ENCODE measurements at regions of chr6 and their contacts with region 1.

Region 1: DNA sequence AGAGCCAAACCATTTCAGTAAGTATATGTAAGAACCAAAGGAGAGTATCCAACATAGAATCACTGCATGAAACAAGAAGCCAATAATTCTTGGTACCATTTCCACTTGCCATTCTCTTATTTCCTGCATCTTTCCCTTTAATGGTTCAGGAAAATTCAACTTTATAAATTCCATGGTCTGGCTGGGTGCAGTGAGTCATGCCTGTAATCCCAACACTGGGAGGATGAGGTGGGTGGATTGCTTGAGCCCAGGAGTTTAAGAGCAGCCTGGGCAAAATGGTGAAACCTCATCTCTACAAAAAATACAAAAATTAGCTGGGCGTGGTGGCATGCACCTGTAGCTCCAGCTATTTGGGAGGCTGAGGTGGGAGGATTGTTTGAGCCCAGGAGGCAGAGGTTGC is 21.2 kb downstream of the NHLRC1 start:
- DNase-seq: no peak
- H3K4me3 ChIP-seq: no peak overlapping the region
- H3K27ac ChIP-seq: no peak overlapping the region
- H3K4me1 ChIP-seq: peaks cover 3% of the 10 kb centered on the region
- H3K27me3 ChIP-seq: no peaks in the 10 kb centered on the region
- CTCF ChIP-seq: no peak

Region 2: DNA sequence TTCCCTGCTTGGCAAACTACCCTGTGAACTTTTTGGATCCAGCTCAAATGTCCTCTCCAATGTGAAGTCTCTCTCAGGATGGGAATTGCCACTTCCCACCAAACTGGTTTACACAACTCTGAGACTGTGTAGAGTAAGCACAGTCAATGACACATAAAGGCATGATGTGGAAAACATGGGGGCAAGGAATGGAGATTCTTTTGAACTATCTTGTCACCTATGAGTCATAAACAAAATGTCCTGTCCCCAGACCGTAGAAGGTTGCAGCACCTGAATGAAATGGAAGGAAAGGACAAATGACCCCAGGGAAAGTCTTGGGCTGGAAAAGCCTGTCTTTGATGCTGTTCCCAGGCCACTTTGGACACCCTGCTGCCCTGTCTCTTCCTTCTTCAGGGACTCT is 102.8 kb before region 1 on chr6:
- intact Hi-C with region 1: loop called (anchors 10 kb)
- DNase-seq: no peak
- H3K4me3 ChIP-seq: no peak overlapping the region
- H3K27ac ChIP-seq: no peak overlapping the region
- H3K4me1 ChIP-seq: no peaks in the 10 kb centered on the region
- H3K27me3 ChIP-seq: no peaks in the 10 kb centered on the region
- CTCF ChIP-seq: no peak

Region 3: GRCh38 chr6:18186033-18186432 is 84.8 kb after region 1 on chr6:
- intact Hi-C with region 1: no loop called
- DNase-seq: no peak
- H3K4me3 ChIP-seq: no peak overlapping the region
- H3K27ac ChIP-seq: no peak overlapping the region
- H3K4me1 ChIP-seq: peaks cover 11% of the 10 kb centered on the region
- H3K27me3 ChIP-seq: no peaks in the 10 kb centered on the region
- CTCF ChIP-seq: no peak